ENCODE measurements at regions of chr20 and their contacts with region 1.

Region 1: DNA sequence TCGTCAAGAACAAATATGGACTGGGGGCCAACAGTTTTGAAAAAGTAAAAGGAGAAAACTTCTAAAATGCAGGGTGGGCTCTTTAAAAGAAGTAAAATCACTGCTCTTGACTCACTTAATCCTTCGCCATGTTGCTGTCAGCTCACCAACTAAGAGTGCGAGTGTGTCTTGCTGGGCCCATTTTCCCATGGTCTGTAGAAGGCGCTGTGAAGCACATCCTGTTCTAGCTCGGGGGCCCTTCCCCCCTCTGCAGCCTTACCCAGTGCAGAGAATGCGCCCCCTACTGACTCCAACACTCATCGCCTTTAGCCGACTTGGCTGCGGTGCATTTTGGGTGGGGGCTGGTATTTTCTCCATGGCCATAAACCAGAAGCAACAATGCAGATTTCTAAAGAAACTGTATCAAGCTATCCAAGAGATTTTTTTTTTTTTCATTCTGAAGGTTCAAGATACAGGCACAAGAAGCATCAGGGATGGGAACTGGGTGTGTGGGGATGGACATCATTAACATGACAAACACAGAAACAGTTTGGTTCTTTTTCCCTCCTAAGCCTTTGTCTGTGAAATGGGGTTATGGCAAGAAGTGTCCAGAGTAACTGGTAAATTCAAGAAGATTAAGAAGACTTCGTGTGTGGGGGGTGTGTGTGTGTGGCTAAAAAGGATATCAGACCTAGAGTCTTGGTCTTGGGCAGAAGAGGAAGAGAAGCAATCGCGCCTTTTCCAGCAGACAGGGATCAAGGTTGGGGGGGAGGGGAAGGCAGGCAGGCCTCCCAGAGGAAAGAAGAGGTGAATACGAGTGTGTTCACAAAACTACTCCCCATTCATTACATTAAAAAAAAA is 1.7 kb downstream of the ADNP start:
- DNase-seq: peak; percentile 72 to 97 (median 93)
- ATAC-seq: peak; percentile 54 to 65 (median 60)
- H3K4me3 ChIP-seq: peak overlapping the region; percentile 65 to 69
- H3K4me3 Mint-ChIP-seq: peak overlapping the region; percentile 93 to 96 (median 95)
- H3K27ac ChIP-seq: peak overlapping the region; percentile 47
- H3K27ac Mint-ChIP-seq: peak overlapping the region; percentile 91 to 92
- H3K4me1 ChIP-seq: peaks cover 33 to 40% of the 10 kb centered on the region in 2 experiments
- H3K4me1 Mint-ChIP-seq: peaks cover 56 to 60% (median 57%) of the 10 kb centered on the region in 3 donors
- H3K27me3 ChIP-seq: no peaks in the 10 kb centered on the region
- H3K27me3 Mint-ChIP-seq: no peaks in the 10 kb centered on the region

Region 2: DNA sequence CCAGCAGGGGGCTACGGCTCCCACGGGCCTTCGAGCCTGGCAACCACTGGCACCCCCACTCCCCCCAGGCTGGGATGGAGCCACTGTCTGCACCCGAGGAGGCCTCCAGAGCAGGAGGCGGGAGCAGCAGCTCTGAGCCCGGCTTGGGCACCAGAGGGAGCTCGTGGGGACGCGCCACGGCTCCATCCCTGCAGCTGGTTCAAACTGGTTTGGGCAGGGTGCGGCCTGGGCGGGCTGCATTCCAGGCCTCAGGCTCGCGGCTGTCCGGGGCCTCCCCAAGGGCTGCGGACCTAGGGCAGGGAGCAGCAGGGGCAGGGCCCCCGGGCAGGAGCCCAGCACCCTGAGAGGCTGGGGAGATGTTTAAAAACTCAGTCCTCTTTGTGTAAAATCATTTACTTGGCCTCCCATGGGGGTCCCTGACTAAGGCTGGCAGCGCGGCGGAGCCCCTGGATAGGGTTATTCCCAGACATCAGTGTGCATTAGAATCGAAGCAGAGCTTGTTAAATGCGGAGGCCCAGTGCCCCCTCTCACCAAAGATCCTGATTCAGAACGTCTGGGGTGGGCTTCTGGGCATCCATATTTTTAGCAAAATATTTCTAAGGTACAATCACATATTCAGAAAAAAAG is 138.8 kb before region 1 on chr20:
- CTCF ChIA-PET with region 1: interaction called, 5 to 56 read pairs
- POLR2A ChIA-PET with region 1: interaction called in 1 of 2 experiments, 4 read pairs
- DNase-seq: peak; percentile 43 to 84 (median 67)
- ATAC-seq: peak; percentile 59 to 69 (median 62)
- H3K4me3 ChIP-seq: peak overlapping the region in 1 of 2 donors; percentile 35
- H3K4me3 Mint-ChIP-seq: peak overlapping the region in 1 of 3 donors; percentile 30
- H3K27ac ChIP-seq: peak overlapping the region; percentile 93
- H3K27ac Mint-ChIP-seq: peak overlapping the region; percentile 86 to 91
- H3K4me1 ChIP-seq: peaks cover 2 to 21% of the 10 kb centered on the region in 2 experiments
- H3K4me1 Mint-ChIP-seq: peaks cover 8 to 15% (median 11%) of the 10 kb centered on the region in 3 donors
- H3K27me3 ChIP-seq: peaks cover 0 to under 1% of the 10 kb centered on the region in 2 experiments
- H3K27me3 Mint-ChIP-seq: no peaks in the 10 kb centered on the region

Region 3: GRCh38 chr20:50900261-50900660 is 29.3 kb before region 1 on chr20:
- CTCF ChIA-PET with region 1: interaction called, 3 to 12 read pairs
- POLR2A ChIA-PET with region 1: interaction called in 1 of 2 experiments, 3 read pairs
- DNase-seq: no peak
- ATAC-seq: no peak
- H3K4me3 ChIP-seq: no peak overlapping the region
- H3K4me3 Mint-ChIP-seq: no peak overlapping the region
- H3K27ac ChIP-seq: no peak overlapping the region
- H3K27ac Mint-ChIP-seq: no peak overlapping the region
- H3K4me1 ChIP-seq: no peaks in the 10 kb centered on the region
- H3K4me1 Mint-ChIP-seq: peaks cover 25 to 42% (median 40%) of the 10 kb centered on the region in 3 donors
- H3K27me3 ChIP-seq: no peaks in the 10 kb centered on the region
- H3K27me3 Mint-ChIP-seq: no peaks in the 10 kb centered on the region

Region 4: GRCh38 chr20:50913690-50914375 is 15.7 kb before region 1 on chr20:
- CTCF ChIA-PET with region 1: interaction called in 1 of 2 experiments, 32 read pairs
- POLR2A ChIA-PET with region 1: interaction called in 1 of 2 experiments, 4 read pairs
- DNase-seq: no peak
- ATAC-seq: peak; percentile 37 to 71 (median 65)
- H3K4me3 ChIP-seq: no peak overlapping the region
- H3K4me3 Mint-ChIP-seq: no peak overlapping the region
- H3K27ac ChIP-seq: no peak overlapping the region
- H3K27ac Mint-ChIP-seq: peak overlapping the region; percentile 5 to 51
- H3K4me1 ChIP-seq: peaks cover 25 to 27% of the 10 kb centered on the region in 2 experiments
- H3K4me1 Mint-ChIP-seq: peaks cover 83 to 88% (median 84%) of the 10 kb centered on the region in 3 donors
- H3K27me3 ChIP-seq: no peaks in the 10 kb centered on the region
- H3K27me3 Mint-ChIP-seq: no peaks in the 10 kb centered on the region

Region 5: DNA sequence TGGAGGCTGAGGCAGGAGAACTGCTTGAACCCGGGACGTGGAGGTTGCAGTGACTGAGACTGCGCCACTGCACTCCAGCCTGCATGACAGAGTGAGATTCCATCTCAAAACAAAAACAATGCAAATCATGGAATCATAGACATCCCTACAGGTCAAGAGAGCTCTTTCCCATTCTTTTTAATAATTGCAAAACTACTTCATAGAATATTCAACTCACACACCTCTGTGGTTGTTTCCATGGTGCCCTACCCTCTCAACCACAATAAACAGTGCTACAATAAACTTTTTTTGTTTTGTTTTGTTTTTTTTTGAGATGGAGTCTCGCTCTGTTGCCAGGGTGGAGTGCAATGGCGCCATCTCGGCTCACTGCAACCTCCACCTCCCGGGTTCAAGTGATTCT is 13.6 kb after region 1 on chr20:
- CTCF ChIA-PET with region 1: interaction called in 1 of 2 experiments, 8 read pairs
- POLR2A ChIA-PET with region 1: interaction called, 12 to 23 read pairs
- DNase-seq: peak in 2 of 35 experiments; percentile 8 to 22
- ATAC-seq: no peak
- H3K4me3 ChIP-seq: no peak overlapping the region
- H3K4me3 Mint-ChIP-seq: no peak overlapping the region
- H3K27ac ChIP-seq: no peak overlapping the region
- H3K27ac Mint-ChIP-seq: no peak overlapping the region
- H3K4me1 ChIP-seq: no peaks in the 10 kb centered on the region
- H3K4me1 Mint-ChIP-seq: peaks cover 2 to 6% (median 4%) of the 10 kb centered on the region in 3 donors
- H3K27me3 ChIP-seq: no peaks in the 10 kb centered on the region
- H3K27me3 Mint-ChIP-seq: no peaks in the 10 kb centered on the region

Region 6: GRCh38 chr20:50958615-50959542 is 29.4 kb after region 1 on chr20 and contains the start of gene MOCS3:
- CTCF ChIA-PET with region 1: interaction called, 4 to 33 read pairs
- POLR2A ChIA-PET with region 1: interaction called, 5 to 41 read pairs
- DNase-seq: peak; percentile 58 to 93 (median 82)
- ATAC-seq: peak; percentile 80 to 86 (median 83)
- H3K4me3 ChIP-seq: peak within 1 kb of the TSS; percentile 91 to 95
- H3K4me3 Mint-ChIP-seq: peak within 1 kb of the TSS; percentile 94 to 96 (median 95)
- H3K27ac ChIP-seq: peak within 1 kb of the TSS; percentile 95
- H3K27ac Mint-ChIP-seq: peak within 1 kb of the TSS; percentile 99
- H3K4me1 ChIP-seq: peaks cover 23 to 24% of the 10 kb centered on the region in 2 experiments
- H3K4me1 Mint-ChIP-seq: peaks cover 61 to 67% (median 63%) of the 10 kb centered on the region in 3 donors
- H3K27me3 ChIP-seq: no peaks in the 10 kb centered on the region
- H3K27me3 Mint-ChIP-seq: no peaks in the 10 kb centered on the region
- total RNA-seq, gene MOCS3: 2.6 to 8.3 (median 7.6) TPM